ENCODE measurements at regions of chr2 and their contacts with region 1.

Region 1: DNA sequence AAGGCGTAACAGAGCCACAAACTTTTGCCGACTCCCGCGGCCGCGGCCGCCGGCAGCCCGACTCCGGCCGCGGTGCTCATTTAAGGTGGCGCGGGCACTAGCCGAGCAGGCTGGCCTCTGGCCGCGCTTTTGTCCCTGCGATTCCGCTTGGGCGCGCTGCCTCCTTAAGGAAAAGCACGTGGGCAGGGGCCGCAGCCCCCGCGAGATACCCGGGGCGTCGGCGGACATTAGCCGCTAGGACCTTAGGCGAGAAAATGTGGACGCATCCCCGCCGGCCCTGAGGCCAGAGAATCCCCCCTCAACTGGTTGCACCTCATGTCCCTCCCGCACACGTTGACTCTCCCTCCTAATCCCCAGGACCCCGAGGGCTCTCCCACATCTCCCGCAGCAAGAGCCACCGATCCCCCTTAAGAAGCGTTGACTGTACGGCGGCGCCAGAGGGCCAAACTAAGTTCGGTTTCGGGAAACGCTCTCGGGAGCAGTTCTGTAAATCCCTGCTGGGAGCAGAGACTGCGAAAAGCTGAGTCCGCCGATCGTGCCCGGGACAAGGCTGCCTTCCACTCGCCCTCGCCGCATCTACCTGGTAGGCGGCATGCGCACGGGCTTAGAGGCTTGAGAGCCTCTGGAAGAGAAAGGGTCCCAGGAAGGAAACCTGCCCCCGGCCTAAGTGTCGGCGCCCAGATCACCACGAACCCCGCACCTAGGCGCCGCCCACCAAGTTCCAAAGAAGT is 1.7 kb upstream of the SATB2 start:
- DNase-seq: peak; percentile 95
- ATAC-seq: peak; percentile 58
- H3K4me3 ChIP-seq: peak overlapping the region; percentile 78
- H3K27ac ChIP-seq: peak overlapping the region; percentile 96
- H3K4me1 ChIP-seq: no peaks in the 10 kb centered on the region; the same call in 1 of the 2 replicates
- H3K27me3 ChIP-seq: peaks cover 9% of the 10 kb centered on the region
- CTCF ChIP-seq: no peak
- POLR2A ChIP-seq: no peak
- RAD21 ChIP-seq: no peak

Region 2: DNA sequence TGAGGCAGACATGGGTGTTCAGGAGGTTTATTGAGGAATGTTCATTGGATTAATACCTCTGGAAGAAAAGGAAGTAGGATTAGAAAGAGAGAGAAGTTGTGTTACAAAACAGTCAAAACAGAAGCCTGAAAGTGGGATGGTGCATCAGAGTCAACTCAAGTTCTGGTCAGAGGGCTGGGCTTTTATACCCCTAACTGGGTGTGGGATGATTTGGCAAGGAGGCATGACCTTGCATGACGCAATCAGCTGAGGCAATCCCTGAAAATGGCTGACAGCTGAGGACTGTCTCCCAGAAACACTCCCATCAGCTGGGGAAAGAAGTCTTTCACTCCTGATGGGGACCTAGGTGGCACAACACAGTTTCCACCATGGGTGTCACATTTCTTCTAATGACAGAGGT is 819.9 kb before region 1 on chr2:
- CTCF ChIA-PET with region 1: no interaction called
- POLR2A ChIA-PET with region 1: interaction called, 12 read pairs
- dilution Hi-C with region 1: no loop called
- in situ Hi-C with region 1: no loop called
- intact Hi-C with region 1: no loop called
- DNase-seq: no peak
- ATAC-seq: no peak
- H3K4me3 ChIP-seq: no peak overlapping the region
- H3K27ac ChIP-seq: no peak overlapping the region
- H3K4me1 ChIP-seq: no peaks in the 10 kb centered on the region
- H3K27me3 ChIP-seq: no peaks in the 10 kb centered on the region
- CTCF ChIP-seq: no peak
- POLR2A ChIP-seq: no peak
- RAD21 ChIP-seq: no peak

Region 3: DNA sequence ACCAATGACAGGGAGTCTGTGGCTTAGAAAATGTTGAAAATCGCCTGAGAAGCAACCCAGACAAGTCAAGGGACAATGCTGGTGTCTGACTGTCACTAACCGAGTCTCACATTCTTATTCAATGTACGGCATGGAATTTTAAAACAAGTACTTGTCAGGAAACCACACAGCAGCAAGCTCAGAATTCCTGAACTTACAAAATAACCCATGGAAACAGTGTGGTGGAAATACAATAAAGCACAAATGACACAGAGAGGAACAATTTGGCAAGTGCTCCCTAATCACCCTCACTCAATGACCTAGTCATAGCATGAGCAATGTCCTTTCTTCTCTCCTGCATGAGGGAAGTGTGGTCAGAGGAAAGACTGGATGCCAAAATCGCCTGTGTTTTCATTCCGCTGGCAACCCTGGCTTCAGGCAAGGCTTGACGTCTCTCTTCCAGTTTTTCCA is 155.7 kb before region 1 on chr2:
- CTCF ChIA-PET with region 1: no interaction called
- POLR2A ChIA-PET with region 1: no interaction called
- dilution Hi-C with region 1: no loop called
- in situ Hi-C with region 1: no loop called
- intact Hi-C with region 1: loop called (anchors 1 kb)
- DNase-seq: peak; percentile 94
- ATAC-seq: peak; percentile 77
- H3K4me3 ChIP-seq: no peak overlapping the region; the same call in 1 of the 2 replicates
- H3K27ac ChIP-seq: no peak overlapping the region
- H3K4me1 ChIP-seq: peaks cover 10% of the 10 kb centered on the region
- H3K27me3 ChIP-seq: no peaks in the 10 kb centered on the region
- CTCF ChIP-seq: no peak
- POLR2A ChIP-seq: peak; percentile 5; the same call in 1 of the 2 replicates
- RAD21 ChIP-seq: peak; percentile 9; the same call in 1 of the 2 replicates

Region 4: DNA sequence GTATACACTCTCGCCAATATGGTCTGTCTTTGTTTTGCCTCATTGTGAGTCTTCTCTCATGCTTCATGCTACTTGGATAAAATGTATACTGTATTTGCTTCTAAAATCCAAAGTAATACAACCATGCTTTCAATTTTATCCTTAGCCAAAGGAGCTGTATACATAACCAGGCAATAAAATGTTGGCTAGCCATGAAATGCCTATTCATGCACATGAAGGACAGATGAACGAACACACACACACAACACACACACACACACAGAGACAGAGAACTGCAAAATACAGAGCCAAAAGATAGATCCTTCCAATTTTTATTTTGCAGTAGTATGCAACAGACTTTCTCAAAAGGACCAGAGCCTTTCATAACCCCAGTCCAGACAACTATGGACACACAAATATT is 115.4 kb before region 1 on chr2:
- CTCF ChIA-PET with region 1: no interaction called
- POLR2A ChIA-PET with region 1: no interaction called
- dilution Hi-C with region 1: no loop called
- in situ Hi-C with region 1: no loop called
- intact Hi-C with region 1: no loop called
- DNase-seq: no peak
- ATAC-seq: no peak
- H3K4me3 ChIP-seq: no peak overlapping the region
- H3K27ac ChIP-seq: no peak overlapping the region
- H3K4me1 ChIP-seq: no peaks in the 10 kb centered on the region
- H3K27me3 ChIP-seq: no peaks in the 10 kb centered on the region
- CTCF ChIP-seq: no peak
- POLR2A ChIP-seq: no peak
- RAD21 ChIP-seq: no peak

Measured in IMR-90 (cell line).